Heart left ventricle (tissue), 16 donors: ENCODE measurements at regions of chr13 and their contacts with region 1.

Region 1: DNA sequence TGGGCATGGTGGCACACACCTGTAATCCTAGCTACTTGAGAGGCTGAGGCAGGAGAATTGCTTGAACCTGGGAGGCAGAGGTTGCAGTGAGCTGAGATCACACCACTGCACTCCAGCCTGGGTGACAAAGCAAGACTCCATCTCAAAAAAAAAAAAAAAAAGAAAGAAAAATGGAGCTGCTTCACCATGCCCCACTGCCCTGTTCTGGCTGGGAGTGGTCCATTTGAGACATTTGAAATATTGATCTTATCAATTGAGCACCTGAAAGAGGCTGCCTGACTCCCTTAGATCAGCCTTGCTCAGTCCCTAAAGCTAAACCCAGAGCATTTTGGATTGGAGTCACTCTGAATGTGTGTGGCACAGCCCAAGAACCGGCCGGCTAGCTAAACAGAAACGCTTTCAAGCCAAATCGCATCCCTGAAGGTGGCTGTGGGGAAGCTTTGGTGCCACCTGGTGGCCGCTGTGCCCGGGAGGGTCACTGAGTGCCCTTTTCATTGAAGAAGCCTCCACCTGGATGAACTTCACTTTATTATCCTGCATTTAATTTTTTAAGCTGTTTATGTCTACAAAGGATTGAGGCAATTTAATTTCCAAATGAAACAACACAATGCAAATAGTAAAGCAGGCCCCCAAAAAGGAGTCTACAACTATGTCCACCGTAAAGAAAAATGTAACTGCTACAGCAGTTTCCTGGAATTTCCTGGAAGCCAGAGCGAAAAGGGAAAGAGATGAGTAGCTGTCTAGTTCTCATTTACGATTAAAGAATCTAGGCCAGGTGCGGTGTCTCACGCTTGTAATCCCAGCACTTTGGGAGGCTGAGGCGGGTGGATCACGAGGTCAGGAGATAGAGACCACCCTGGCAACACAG is 53.1 kb upstream of the SERPINE3 start:
- DNase-seq: peak; percentile 72 to 86 (median 77)
- ATAC-seq: peak in 3 of 4 donors; percentile 84 to 86 (median 84)
- H3K4me3 ChIP-seq: no peak overlapping the region
- H3K27ac ChIP-seq: no peak overlapping the region
- H3K4me1 ChIP-seq: peaks cover 0 to 22% (median 3%) of the 10 kb centered on the region in 12 donors
- H3K27me3 ChIP-seq: no peaks in the 10 kb centered on the region
- CTCF ChIP-seq: peak; percentile 85 to 97 (median 93)
- POLR2A ChIP-seq: no peak

Region 2: GRCh38 chr13:50991579-50992521 is 294.5 kb before region 1 on chr13:
- intact Hi-C with region 1: no loop called
- DNase-seq: no peak
- ATAC-seq: peak in 2 of 4 donors; percentile 11 to 29
- H3K4me3 ChIP-seq: no peak overlapping the region
- H3K27ac ChIP-seq: peak overlapping the region in 3 of 12 donors; percentile 5 to 42 (median 22)
- H3K4me1 ChIP-seq: peaks cover 0 to 40% (median 16%) of the 10 kb centered on the region in 12 donors
- H3K27me3 ChIP-seq: no peaks in the 10 kb centered on the region
- CTCF ChIP-seq: no peak
- POLR2A ChIP-seq: no peak

Region 3: DNA sequence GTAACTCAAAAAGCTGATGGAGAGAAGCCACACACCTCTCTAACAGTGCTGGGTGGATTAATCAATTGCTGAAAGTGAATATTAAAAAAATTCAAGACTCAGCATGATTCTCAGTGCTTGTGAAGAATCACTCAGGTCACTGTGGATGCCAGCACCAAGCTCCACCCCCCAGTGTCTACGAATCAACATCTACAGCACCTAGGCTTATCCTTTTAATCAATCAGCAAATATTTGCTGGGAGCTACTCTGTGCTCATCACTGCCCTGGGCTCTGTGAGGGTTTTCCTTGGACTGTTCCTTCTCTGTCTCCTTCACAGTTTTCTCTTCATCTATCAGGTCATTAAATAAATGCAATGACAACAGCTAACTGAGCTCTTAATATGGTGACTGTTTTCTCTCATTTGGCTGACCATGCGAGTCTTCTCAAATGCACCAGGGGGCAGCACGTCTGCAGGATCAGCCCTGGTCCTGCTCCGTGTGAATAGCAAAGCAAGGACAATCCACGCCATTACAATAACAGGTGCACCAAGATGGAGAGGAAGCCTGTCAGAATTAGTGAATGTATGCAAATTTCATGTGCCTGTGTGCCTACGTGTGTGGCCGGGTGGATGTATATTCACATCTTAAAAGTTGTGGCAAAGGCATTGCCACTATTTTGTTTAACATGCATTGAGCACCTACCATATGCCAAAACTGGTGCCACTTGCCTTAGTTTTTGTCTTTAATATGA is 160.7 kb before region 1 on chr13:
- intact Hi-C with region 1: loop called in 9 of 10 experiments (anchors 1 to 5 kb)
- DNase-seq: peak in 3 of 5 donors; percentile 35 to 62 (median 38)
- ATAC-seq: peak in 3 of 4 donors; percentile 73 to 84 (median 76)
- H3K4me3 ChIP-seq: no peak overlapping the region
- H3K27ac ChIP-seq: no peak overlapping the region
- H3K4me1 ChIP-seq: no peaks in the 10 kb centered on the region
- H3K27me3 ChIP-seq: no peaks in the 10 kb centered on the region
- CTCF ChIP-seq: peak; percentile 64 to 82 (median 70)
- POLR2A ChIP-seq: no peak

Region 4: GRCh38 chr13:51134763-51135365 is 151.5 kb before region 1 on chr13:
- intact Hi-C with region 1: loop called in 1 of 10 experiments (anchors 5 kb)
- DNase-seq: no peak
- ATAC-seq: no peak
- H3K4me3 ChIP-seq: no peak overlapping the region
- H3K27ac ChIP-seq: no peak overlapping the region
- H3K4me1 ChIP-seq: no peaks in the 10 kb centered on the region
- H3K27me3 ChIP-seq: no peaks in the 10 kb centered on the region
- CTCF ChIP-seq: no peak
- POLR2A ChIP-seq: no peak

Region 5: DNA sequence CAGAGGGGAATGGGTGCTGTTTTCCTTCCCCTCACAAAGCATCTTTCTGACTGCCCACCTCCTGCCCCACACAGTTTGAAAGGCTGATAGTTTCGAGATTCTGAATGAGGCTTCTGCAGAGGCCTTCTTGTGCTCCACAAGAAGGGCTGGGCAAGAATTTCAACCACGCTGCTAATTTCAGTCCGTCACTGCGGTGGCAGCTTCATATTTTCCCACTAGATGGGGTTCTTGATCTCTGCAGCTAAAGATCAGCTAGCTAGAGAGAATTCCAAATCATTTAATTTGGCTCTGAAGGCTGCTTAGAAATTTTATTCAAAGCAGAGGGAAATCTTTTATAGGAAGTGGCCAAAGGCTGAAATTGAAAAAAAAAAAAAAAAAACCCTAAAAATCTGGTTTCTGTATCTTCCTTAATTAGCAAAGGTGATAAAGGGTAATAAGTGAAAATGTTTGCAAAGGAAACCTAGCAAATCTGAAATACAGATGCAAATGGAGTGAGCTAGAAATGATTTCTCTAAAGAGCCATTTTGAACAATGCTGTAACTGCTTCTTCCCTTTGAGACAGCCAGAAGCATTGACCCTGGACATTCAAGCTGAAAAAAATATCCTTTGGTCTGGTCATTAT is 137.3 kb before region 1 on chr13:
- intact Hi-C with region 1: loop called (anchors 1 to 2 kb)
- DNase-seq: peak in 2 of 5 donors; percentile 17 to 33
- ATAC-seq: peak in 3 of 4 donors; percentile 65 to 69 (median 67)
- H3K4me3 ChIP-seq: no peak overlapping the region
- H3K27ac ChIP-seq: peak overlapping the region in 2 of 12 donors; percentile 27 to 38
- H3K4me1 ChIP-seq: peaks cover 0 to 4% (median 0%) of the 10 kb centered on the region in 12 donors
- H3K27me3 ChIP-seq: peaks cover 0 to 4% (median 0%) of the 10 kb centered on the region in 9 donors
- CTCF ChIP-seq: peak; percentile 45 to 76 (median 68)
- POLR2A ChIP-seq: no peak